ENCODE measurements at regions of chr17 and their contacts with region 1.

Region 1: DNA sequence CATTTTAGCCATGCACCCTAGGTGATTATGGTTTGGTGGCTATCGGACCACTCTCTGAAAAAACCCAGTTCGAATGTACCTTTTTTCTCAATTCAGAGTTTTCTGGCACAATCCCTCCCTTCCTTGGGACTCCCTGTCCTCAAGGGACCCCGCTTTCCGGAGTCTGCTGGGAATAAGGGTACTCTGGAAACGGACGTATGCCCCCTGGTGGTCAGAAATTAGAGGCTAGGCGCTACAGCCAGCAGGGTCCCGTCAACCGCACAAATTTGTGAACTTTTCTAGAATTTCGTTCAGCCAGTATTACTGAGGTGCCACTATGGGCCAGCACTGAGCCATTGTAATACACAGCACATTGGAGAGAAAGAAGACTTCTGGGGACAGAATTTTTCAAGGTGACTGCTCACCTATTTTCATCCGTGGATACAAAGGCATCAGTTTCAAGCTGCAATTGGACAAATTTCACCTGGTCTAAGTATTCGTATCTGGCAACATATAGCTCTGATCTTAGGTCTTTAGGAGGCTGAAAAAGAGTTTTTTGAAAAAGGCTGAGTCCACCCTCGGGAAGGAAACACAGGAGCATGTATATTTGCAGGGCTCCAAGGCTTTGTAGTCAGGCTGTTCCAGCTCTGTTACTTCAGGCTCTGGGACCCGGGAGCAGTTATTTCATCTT is 27.1 kb upstream of the CRYBA1 start:
- DNase-seq: no peak
- ATAC-seq: peak; percentile 97
- H3K4me3 ChIP-seq: no peak overlapping the region
- H3K27ac ChIP-seq: no peak overlapping the region
- H3K4me1 ChIP-seq: no peaks in the 10 kb centered on the region
- H3K27me3 ChIP-seq: no peaks in the 10 kb centered on the region
- CTCF ChIP-seq: peak; percentile 76 to 95 (median 79)
- EP300 ChIP-seq: no peak
- POLR2A ChIP-seq: no peak
- RAD21 ChIP-seq: peak; percentile 54

Region 2: GRCh38 chr17:29116804-29117772 is 102.4 kb before region 1 on chr17:
- CTCF ChIA-PET with region 1: interaction called, 12 read pairs
- POLR2A ChIA-PET with region 1: no interaction called
- RAD21 ChIA-PET with region 1: no interaction called
- SMC1A ChIA-PET with region 1: interaction called, 5 read pairs
- in situ Hi-C with region 1: no loop called
- intact Hi-C with region 1: no loop called
- DNase-seq: peak; percentile 5
- ATAC-seq: peak; percentile 89
- H3K4me3 ChIP-seq: no peak overlapping the region
- H3K27ac ChIP-seq: no peak overlapping the region
- H3K4me1 ChIP-seq: no peaks in the 10 kb centered on the region
- H3K27me3 ChIP-seq: no peaks in the 10 kb centered on the region
- CTCF ChIP-seq: peak; percentile 90 to 95 (median 92)
- EP300 ChIP-seq: no peak
- POLR2A ChIP-seq: no peak
- RAD21 ChIP-seq: peak; percentile 70

Region 3: DNA sequence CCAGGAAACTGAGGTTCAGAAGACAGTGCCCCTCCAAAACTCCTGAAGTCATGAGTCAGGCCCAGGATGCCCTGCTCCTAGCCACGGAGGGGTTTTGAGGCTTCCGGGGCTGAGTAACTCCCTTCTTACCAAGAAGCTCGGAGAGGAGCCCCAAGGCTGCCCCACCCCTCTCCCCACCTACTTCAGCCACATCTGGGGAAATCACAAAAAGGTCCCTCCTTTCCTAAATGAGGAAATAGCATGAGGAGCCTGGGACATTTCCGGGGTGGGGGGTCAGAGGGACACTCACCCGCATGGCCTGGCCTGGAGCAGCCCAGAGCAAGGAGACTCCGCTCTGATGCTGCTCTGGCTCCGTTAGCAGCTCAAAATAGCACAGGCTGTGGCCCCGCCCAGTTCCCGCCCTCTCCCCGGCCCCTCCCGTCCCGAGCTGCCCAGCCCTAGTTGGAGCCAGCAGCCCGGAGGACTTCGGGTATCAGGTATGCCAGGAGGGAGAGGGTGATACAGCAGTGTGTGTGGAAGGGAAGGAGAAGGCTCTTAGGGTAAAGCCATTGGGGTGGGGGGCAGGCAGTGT is 79.4 kb before region 1 on chr17:
- CTCF ChIA-PET with region 1: interaction called, 358 read pairs
- POLR2A ChIA-PET with region 1: interaction called, 7 read pairs
- RAD21 ChIA-PET with region 1: interaction called, 182 read pairs
- SMC1A ChIA-PET with region 1: interaction called, 150 read pairs
- in situ Hi-C with region 1: no loop called
- intact Hi-C with region 1: loop called (anchors 1 kb)
- DNase-seq: no peak
- ATAC-seq: peak; percentile 82
- H3K4me3 ChIP-seq: peak overlapping the region; percentile 81
- H3K27ac ChIP-seq: peak overlapping the region; percentile 76
- H3K4me1 ChIP-seq: peaks cover 31% of the 10 kb centered on the region
- H3K27me3 ChIP-seq: no peaks in the 10 kb centered on the region
- CTCF ChIP-seq: no peak
- EP300 ChIP-seq: no peak
- POLR2A ChIP-seq: peak; percentile 81
- RAD21 ChIP-seq: no peak

Region 4: GRCh38 chr17:29155227-29155965 is 64.1 kb before region 1 on chr17:
- CTCF ChIA-PET with region 1: interaction called, 358 read pairs
- POLR2A ChIA-PET with region 1: interaction called, 4 read pairs
- RAD21 ChIA-PET with region 1: interaction called, 182 read pairs
- SMC1A ChIA-PET with region 1: interaction called, 150 read pairs
- in situ Hi-C with region 1: no loop called
- intact Hi-C with region 1: no loop called
- DNase-seq: no peak
- ATAC-seq: peak; percentile 79
- H3K4me3 ChIP-seq: no peak overlapping the region
- H3K27ac ChIP-seq: no peak overlapping the region
- H3K4me1 ChIP-seq: peaks cover 11% of the 10 kb centered on the region
- H3K27me3 ChIP-seq: no peaks in the 10 kb centered on the region
- CTCF ChIP-seq: no peak
- EP300 ChIP-seq: no peak
- POLR2A ChIP-seq: no peak
- RAD21 ChIP-seq: no peak

Region 5: DNA sequence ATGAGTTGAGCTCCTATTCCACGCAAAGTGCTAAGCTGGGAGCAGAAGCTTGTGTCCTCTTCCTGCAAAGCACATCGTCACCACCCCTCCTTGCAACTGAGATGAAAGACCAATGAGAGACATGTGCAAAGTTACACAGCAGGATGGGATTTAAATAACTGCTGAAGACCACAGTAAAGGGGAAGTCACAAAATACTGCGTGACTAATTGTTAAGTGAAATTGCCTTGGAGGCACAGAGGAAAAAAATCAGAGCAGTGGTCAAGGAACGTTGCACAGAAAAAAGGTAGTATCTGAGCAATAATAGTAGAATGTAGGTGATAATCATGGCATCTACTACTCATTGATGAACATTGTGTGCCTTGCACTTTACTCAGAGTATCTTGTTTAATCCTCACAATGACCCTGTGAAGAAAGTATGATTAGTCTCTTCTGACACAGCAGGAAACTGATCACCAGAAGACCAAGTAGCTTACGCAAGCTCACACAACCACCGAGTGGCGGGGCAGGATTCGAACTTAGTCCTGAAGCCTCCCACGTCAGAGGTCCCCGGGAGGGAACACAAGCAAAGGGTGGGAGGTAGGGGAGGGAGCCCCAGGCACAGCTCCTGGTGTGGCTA is 23.9 kb before region 1 on chr17:
- CTCF ChIA-PET with region 1: interaction called, 52 read pairs
- POLR2A ChIA-PET with region 1: interaction called, 5 read pairs
- RAD21 ChIA-PET with region 1: no interaction called
- SMC1A ChIA-PET with region 1: interaction called, 4 read pairs
- in situ Hi-C with region 1: no loop called
- intact Hi-C with region 1: no loop called
- DNase-seq: no peak
- ATAC-seq: peak; percentile 88
- H3K4me3 ChIP-seq: 0 out of 2 replicates have a peak overlapping the region, but pooled peaks have one; percentile 5
- H3K27ac ChIP-seq: peak overlapping the region; percentile 15; the same call in 1 of the 2 replicates
- H3K4me1 ChIP-seq: peaks cover 15% of the 10 kb centered on the region
- H3K27me3 ChIP-seq: no peaks in the 10 kb centered on the region
- CTCF ChIP-seq: no peak
- EP300 ChIP-seq: no peak; a peak in 1 of 4 replicates
- POLR2A ChIP-seq: no peak
- RAD21 ChIP-seq: no peak

Region 6: DNA sequence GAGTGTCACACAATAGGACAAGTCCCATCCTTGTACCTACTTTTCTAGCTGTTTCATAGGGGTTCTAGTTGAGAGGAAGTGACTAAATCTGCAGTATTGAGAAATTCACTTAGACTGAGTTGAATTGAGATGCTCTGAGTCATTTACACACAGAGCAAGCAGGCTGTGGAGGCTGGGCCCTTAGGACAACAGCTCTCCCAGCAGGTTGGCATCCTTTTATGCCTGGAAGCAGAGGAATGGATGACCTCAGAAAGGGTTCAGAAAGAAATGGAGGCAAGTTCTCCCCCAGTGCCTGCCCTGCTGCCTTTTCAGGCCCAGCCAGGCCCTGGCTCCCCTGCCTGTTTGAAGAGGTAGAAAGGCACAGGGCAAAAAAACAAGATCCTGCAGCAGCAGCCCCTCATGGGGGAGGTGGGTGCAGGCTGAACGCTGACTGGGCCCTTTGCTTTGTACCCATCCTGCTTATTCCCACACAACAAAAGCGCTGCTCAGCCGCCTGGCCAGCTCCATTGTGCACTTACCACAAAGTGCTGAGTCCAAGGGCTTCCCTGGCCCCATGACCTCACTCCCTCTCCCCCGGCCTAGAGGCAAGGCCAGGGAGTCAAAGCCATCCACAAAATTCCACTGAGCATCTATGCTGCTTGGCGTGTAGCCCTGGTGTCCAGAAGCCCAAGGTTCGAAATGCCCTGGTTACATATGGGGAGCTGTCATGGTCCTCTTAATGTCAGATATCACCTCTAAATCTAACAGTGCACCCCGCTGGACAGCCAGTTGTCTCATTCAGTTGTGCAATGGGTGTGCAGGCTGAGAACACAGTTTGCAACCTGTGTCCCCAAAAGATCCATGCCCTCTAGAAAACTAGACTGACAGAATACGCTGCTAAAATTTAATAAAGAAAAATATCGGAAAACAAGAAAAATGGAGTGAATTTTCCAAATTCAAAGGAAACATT is 21.8 kb after region 1 on chr17:
- CTCF ChIA-PET with region 1: interaction called, 26 read pairs
- POLR2A ChIA-PET with region 1: no interaction called
- RAD21 ChIA-PET with region 1: interaction called, 3 read pairs
- SMC1A ChIA-PET with region 1: interaction called, 7 read pairs
- in situ Hi-C with region 1: no loop called
- intact Hi-C with region 1: no loop called
- DNase-seq: no peak
- ATAC-seq: no peak; the same call in 2 of the 3 replicates
- H3K4me3 ChIP-seq: no peak overlapping the region
- H3K27ac ChIP-seq: no peak overlapping the region
- H3K4me1 ChIP-seq: no peaks in the 10 kb centered on the region; the same call in 1 of the 2 replicates
- H3K27me3 ChIP-seq: no peaks in the 10 kb centered on the region
- CTCF ChIP-seq: 0 out of 6 replicates have a peak, but pooled peaks of 1 of the 3 experiments have one; percentile 16
- EP300 ChIP-seq: no peak
- POLR2A ChIP-seq: no peak
- RAD21 ChIP-seq: peak; percentile 39

Region 7: DNA sequence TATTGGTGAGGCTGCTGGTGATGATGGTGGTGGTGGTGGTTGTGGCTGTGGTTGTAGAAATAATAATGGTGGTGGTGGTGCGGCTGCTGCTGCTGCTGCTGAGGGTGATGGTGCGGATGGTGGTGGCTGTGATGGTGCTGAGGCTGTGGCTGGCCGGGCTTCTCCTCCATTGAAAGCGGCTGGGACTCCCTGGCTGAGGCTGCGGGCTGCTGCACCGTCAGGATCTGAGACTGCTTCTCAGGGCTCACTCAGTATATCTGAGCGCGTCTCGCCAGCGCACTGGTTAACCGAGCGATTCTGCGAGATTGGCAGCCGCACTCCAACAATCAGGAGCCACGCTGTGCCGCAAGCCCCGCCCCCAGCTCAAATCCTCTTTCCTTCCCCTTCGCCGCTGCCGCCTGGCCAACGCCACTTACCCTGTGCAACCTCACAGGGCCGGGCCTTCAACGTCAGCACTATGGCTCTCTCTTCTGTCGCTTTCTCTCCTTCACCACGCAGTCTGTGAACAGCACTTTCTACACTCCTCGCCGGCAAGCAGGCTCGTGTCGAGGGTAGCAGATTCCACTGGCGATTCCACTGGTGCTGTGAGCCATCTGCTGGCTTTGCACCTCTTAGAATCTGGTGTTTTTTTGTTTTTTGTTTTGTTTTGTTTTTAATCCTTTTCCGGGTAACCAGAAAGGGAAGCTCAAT is 74.5 kb after region 1 on chr17 and contains the start of gene NUFIP2:
- CTCF ChIA-PET with region 1: interaction called, 33 read pairs
- POLR2A ChIA-PET with region 1: interaction called, 3 read pairs
- RAD21 ChIA-PET with region 1: interaction called, 10 read pairs
- SMC1A ChIA-PET with region 1: interaction called, 24 read pairs
- in situ Hi-C with region 1: no loop called
- intact Hi-C with region 1: no loop called
- DNase-seq: peak; percentile 95
- ATAC-seq: peak; percentile 94
- H3K4me3 ChIP-seq: peak within 1 kb of the TSS; percentile 89
- H3K27ac ChIP-seq: peak within 1 kb of the TSS; percentile 97
- H3K4me1 ChIP-seq: peaks cover 2% of the 10 kb centered on the region; the same call in 1 of the 2 replicates
- H3K27me3 ChIP-seq: no peaks in the 10 kb centered on the region
- CTCF ChIP-seq: no peak
- EP300 ChIP-seq: peak in 1 of 2 experiments; percentile 86; a peak in 2 of 4 replicates
- POLR2A ChIP-seq: peak; percentile 98
- RAD21 ChIP-seq: peak; percentile 3; the same call in 1 of the 2 replicates
- polyA plus RNA-seq, gene NUFIP2: 4.3 to 5.2 TPM